ENCODE measurements at regions of chrX and their contacts with region 1.

Region 1: GRCh38 chrX:150683536-150684146 is 9.6 kb upstream of the MTMR1 start:
- DNase-seq: no peak
- ATAC-seq: no peak

Region 2: GRCh38 chrX:150558424-150558823 is 125.2 kb before region 1 on chrX:
- intact Hi-C with region 1: no loop called
- DNase-seq: no peak
- ATAC-seq: no peak

Region 3: DNA sequence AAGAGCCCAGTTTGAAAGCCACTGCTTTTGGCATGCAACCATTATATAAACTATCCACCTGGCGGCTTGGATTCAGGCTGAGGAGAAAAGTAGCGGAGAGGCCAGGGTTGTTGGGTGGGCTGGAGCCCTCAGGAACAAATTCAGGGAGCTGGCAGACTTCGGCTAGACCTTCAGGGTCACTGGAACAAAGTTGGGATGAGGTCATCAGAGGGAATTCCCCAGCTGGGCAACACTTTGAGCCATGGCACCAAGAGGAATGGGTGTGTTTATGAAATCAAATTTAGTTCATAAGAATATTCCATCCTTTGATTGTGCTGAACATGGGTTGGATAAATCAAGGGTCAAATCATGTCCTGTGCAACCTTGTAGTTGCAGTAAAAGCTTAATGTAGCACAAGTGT is 31.5 kb after region 1 on chrX:
- intact Hi-C with region 1: loop called (anchors 5 kb)
- DNase-seq: no peak
- ATAC-seq: no peak